Caki2 (cell line): ENCODE measurements at regions of chr6 and their contacts with region 1.

Region 1: DNA sequence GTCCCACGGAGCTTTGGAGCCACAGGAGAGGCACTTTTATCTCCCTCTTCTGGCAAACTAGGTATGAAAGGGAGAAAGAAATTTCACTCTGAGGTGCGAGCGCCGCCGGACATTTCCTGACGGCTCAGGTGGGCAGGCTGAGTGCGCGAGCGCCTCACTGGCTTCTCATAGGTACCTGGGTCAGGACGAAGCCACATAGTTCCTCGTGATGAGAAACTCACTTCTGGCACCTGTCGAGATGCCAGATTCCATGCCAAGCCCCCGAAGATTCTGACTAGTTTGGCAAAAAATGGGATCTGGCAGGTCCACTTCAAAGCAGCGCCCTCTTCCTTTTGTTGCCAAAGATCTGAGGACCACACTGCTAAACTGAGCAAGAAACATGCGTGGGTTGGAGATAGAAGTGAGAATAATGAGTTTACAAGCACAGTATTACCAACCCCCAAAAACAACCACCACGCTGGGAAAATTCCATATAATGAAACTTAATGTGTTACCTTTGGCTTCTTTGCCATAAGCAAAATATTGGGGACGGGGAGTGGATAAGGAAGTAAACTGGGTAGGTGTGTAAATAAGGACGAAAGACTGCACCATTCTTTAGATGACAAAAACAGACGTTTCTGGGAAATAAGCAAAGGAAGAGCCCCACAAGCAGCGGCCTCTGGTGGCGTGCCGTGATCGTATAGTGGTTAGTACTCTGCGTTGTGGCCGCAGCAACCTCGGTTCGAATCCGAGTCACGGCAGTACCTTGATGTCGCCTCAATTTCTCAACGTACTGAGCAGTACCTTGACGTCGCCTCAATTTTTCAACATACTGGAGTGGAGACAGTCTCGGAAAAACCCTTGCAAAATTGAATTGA is 89.8 kb upstream of the PRSS16 start:
- DNase-seq: peak; percentile 68

Region 2: DNA sequence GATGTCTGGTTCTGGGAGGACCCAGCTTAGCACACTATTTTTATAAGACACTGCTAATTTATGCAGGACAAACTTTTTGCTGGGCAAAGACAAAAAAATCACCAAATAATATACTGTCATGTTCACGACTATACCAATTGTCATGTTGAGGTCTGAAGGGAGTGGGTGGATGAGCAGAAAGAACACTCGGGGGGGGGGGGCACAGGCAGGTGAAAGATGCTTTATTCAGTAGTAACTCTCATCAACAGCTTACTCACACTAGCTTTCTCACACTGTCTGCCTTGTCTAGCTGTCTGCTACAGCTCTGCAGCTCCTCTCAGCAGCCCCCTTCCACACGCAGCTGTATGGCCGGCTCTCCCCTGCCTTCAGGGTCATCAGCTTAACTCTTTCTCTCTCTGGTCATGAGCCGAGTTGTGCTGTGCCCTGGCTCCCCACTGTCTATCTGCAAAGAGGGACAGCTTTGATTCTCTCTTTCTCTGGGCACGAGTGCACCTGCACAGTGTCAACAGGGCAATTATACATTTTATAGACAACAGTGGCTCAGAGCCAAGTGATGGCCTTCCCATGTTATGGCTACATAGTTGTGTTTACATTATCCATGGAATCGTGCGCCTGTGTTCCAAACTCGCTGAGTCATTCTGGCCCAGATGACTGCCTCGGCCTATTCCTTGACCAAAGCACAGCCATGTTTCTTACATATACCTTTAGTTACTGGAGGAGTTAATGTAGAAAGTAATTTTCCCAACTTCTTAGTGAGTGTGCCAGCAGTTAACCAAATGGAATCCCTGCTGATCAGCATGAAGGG is 97.9 kb before region 1 on chr6:
- in situ Hi-C with region 1: no loop called
- DNase-seq: no peak

Region 3: DNA sequence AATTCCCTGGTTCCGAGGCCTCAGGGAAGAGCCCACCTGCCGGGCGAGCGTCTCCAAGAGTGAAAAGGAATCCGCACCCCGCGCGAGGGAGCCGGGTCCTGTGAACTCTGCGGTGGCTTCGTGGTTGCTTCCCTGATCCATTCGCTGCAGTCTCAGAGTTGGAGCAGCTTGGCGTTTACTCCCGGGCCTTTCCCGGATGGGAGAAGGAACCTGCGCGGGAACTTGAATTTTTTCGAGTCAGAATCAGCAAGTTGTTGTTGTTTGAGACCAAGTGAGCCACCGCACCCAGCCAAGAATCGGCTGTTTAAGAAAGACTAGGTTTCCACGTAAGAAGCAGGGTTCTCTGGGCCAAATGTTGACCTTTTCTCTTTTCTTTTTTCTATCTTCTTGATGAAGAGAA is 102.7 kb after region 1 on chr6:
- in situ Hi-C with region 1: no loop called
- DNase-seq: no peak

Region 4: DNA sequence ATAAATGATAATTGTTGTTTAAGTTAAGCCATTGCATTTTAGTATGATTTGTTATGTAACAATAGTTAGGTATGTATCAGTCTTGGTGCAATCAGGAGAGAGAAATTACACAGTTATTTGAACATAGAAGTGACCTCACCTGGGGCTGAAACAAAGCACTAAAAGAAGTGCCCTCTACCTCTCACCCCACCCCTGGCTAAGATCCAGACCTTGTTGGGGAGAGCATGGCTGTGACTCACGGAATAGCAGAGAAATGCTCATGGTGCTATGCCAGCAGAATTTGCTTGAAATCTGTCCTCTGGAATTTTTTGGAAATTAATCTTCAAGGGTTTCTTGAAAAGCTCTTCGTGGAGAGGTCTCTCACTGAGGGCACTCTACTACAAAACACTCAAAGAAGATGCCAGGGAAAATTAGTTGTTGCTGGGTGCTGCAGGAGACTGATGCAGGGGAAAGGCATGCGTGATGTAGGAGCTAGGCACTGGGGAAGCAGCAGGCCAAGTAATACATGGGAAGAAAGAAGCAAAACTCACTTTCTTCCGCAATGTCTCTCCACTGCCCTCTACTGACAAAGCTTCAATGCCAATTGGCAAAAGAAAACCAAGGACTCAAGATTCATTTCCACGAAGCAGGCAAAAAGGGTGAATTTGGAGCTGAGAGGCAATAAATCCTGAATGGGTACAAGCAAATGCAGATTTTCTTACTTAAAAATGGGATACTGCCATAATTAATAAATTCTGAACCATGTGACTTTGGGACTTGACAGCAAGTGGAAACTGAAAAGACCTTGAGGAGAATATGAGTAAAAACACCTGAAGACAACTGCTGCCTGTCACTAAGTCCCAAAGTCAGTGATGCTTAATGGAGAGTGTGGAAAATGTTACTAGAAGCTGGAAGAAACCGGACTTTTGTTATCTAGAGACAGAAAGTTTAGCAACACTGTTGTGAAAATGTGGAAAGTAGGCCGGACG is 451.5 kb after region 1 on chr6:
- in situ Hi-C with region 1: loop called (anchors 10 kb)
- DNase-seq: peak; percentile 77

Region 5: DNA sequence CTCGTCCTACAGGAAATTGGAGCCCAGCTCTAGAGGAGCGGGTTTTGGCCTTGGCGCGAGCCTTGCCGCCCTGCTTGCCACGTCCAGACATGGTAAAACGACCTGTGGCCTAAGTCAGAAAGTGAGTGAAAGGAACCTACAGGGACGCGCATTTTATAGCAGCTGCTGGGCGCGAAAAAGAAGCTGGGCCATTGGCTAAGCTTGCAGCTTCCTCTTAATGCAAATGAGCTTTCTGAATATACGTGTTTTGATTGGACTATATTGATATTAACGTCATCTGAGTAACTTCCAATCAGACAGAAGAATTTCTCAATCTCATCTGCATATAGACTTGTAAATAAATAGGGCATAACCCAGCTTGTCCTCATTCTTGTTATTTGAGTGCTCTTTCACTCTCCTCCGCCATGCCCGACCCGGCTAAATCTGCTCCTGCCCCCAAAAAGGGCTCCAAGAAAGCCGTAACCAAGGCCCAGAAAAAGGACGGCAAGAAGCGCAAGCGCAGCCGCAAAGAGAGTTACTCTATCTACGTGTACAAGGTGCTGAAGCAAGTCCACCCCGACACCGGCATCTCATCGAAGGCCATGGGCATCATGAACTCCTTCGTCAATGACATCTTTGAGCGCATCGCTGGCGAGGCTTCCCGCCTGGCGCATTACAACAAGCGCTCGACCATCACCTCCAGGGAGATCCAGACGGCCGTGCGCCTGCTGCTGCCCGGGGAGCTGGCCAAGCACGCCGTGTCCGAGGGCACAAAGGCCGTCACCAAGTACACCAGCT is 735.6 kb after region 1 on chr6:
- in situ Hi-C with region 1: loop called (anchors 25 kb)
- DNase-seq: peak; percentile 98